Naive thymus-derived CD8-positive, alpha-beta T cell (primary cell): ENCODE measurements at regions of chr17 and their contacts with region 1.

Region 1: DNA sequence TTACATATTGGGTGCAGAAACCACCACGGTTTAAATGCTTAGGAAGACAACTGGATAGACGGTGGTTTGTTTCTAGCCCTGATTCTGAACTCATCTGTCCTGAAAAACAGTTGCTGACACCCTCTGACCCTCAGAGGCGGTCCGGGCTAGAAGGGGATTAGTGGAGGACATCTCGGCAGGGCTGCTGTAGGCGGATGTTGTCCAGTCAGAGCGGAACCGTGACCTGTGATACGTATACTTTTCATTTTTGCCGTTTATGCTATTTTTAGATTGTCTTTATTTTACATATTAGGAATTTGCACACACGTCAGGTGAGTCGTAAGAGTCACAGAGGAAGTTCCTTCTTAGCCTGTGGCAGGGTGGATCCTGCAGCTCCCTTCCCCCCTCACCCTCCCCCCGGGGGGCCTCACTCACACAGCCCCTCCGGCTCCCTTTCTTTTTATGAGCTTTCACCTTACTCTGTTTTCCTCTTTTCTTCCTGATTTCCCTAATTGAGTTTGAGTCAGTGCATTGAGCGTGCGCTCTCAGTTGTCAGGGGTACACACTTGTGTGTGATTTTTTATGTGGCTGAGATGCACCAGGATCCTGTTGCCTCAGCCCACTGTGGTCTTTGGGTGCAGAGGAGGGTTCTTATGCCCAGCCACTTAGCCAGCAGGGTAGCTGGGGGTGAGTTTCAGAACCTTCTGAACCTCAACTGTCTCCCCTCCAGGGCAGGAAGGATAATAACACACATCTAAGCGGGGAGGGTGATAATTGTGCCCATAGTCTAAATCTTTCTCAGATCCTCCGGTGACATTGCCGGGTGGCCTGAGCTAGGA is 211.1 kb upstream of the CHMP6 start:
- DNase-seq: no peak
- ATAC-seq: peak; percentile 49 to 52
- H3K4me3 Mint-ChIP-seq: peak overlapping the region; percentile 70 to 90 (median 82)
- H3K27ac Mint-ChIP-seq: peak overlapping the region; percentile 71 to 98 (median 96)
- H3K4me1 Mint-ChIP-seq: peaks cover 32 to 73% (median 64%) of the 10 kb centered on the region in 4 donors
- H3K27me3 Mint-ChIP-seq: no peaks in the 10 kb centered on the region

Region 2: GRCh38 chr17:80760511-80760911 is 20.1 kb before region 1 on chr17:
- POLR2A ChIA-PET with region 1: interaction called, 18 read pairs
- DNase-seq: no peak
- ATAC-seq: no peak
- H3K4me3 Mint-ChIP-seq: peak overlapping the region in 5 of 10 donors; percentile 24 to 86 (median 75)
- H3K27ac Mint-ChIP-seq: peak overlapping the region; percentile 29 to 98 (median 89)
- H3K4me1 Mint-ChIP-seq: peaks cover 29 to 78% (median 67%) of the 10 kb centered on the region in 4 donors
- H3K27me3 Mint-ChIP-seq: no peaks in the 10 kb centered on the region

Region 3: GRCh38 chr17:80791758-80792284 is 11.2 kb after region 1 on chr17:
- POLR2A ChIA-PET with region 1: interaction called, 67 read pairs
- DNase-seq: no peak
- ATAC-seq: no peak
- H3K4me3 Mint-ChIP-seq: peak overlapping the region; percentile 70 to 91 (median 81)
- H3K27ac Mint-ChIP-seq: peak overlapping the region; percentile 93 to 99 (median 96)
- H3K4me1 Mint-ChIP-seq: peaks cover 47 to 77% (median 70%) of the 10 kb centered on the region in 4 donors
- H3K27me3 Mint-ChIP-seq: no peaks in the 10 kb centered on the region

Region 4: DNA sequence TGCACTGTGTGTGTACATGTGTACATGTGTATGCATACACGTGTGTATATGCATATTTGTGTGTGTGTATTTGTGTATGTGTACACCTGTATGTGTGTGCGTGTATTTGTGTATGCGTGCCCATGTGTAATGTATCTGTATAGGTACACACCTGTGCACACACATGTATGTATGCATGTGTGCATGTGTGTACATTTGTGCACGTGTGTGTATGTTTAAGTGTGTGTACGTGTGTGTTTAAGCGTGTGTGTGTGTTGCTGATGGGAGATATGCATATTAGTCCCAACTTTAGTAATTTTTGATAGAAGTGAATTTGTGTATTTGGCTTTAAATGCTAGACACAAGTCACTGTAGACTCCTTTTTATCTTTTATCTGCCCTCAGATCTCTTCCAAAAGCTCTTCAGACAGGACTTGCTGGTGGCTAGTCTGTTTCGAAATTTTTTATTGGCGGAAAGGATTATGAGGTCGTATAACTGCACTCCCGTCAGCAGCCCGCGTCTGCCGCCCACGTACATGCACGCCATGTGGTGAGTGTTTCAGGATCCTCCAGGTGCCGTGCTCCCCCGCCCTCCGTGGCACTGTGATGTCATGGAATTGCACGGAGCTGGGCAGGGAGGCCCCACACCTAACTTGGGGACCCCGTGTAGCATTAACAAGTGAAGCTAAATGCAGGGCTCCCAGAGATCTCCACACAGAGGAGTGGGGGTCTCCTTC is 42.3 kb after region 1 on chr17:
- POLR2A ChIA-PET with region 1: no interaction called
- DNase-seq: no peak
- ATAC-seq: no peak
- H3K4me3 Mint-ChIP-seq: no peak overlapping the region
- H3K27ac Mint-ChIP-seq: peak overlapping the region in 1 of 10 donors; percentile 41
- H3K4me1 Mint-ChIP-seq: peaks cover 23 to 29% (median 27%) of the 10 kb centered on the region in 4 donors
- H3K27me3 Mint-ChIP-seq: no peaks in the 10 kb centered on the region

Region 5: GRCh38 chr17:80832888-80833583 is 52.4 kb after region 1 on chr17:
- POLR2A ChIA-PET with region 1: interaction called, 18 read pairs
- DNase-seq: peak; percentile 41 to 81 (median 64)
- ATAC-seq: peak; percentile 91
- H3K4me3 Mint-ChIP-seq: peak overlapping the region; percentile 74 to 93 (median 88)
- H3K27ac Mint-ChIP-seq: peak overlapping the region; percentile 91 to 97 (median 94)
- H3K4me1 Mint-ChIP-seq: peaks cover 11 to 43% (median 33%) of the 10 kb centered on the region in 4 donors
- H3K27me3 Mint-ChIP-seq: no peaks in the 10 kb centered on the region